ENCODE measurements at regions of chr6 and their contacts with region 1.

Region 1: DNA sequence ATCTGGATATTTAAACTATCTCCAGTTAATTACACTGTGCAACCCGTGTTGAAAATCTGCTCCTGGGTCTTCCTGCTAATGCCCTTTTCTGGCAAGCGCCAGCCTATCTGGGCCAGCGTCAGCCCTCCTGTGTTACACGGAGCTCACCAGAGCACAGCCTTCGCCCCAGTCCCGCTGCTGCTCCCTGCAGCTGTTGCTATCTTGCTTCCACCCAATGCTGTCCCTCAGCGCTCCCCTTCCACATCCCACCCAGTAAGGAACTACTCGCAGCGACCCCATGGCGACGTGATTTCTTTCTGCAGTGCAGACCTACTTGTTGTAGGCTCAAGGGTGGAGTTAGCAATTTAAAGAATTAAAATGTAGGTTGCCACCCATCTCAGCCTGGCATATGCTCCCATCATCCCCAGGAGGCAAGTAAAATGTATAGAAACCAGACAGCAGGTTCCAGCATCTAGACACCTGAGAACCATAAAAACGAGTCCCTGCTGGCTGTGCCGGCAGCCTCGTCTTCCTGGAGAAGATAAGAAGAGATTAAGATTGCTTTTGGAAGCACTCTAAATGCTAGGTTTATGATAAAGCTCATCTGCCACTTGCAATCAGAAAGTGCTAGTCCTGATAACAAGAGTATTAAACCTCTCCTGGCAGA is 254.3 kb upstream of the FOXQ1 start:
- DNase-seq: no peak

Region 2: DNA sequence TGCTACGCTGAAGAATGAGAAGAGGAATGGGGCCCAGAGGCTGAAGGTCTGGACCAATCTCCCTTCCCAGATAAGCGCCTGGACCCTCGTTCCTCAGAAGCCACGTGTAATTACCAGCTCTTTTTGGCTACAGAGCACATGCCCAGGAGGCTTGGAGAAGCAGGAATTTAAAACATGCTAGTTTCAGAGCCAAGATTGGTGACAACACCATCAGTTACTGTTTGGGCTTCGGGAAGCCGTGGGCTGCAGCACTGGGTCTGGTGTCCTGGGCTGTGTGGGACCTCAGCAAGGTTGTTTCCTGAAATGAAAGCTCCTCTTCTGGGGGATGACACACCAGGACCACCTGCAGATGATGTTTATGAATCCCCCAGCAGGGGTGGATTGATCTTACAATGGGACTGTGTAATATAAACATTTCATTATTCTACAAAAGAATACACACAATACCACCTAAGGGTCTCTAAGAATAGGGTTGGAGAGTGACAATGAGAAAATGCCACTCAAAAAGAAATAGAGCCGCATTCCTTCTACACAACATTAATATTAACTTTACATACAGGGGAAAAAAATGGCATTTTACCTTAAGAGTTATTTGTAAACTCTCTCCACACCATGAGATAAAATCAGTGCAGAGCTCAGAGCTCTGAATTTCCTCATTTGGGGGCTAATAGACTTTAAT is 46.5 kb after region 1 on chr6:
- intact Hi-C with region 1: loop called in 1 of 2 experiments (anchors 1 kb)
- DNase-seq: no peak

Region 3: DNA sequence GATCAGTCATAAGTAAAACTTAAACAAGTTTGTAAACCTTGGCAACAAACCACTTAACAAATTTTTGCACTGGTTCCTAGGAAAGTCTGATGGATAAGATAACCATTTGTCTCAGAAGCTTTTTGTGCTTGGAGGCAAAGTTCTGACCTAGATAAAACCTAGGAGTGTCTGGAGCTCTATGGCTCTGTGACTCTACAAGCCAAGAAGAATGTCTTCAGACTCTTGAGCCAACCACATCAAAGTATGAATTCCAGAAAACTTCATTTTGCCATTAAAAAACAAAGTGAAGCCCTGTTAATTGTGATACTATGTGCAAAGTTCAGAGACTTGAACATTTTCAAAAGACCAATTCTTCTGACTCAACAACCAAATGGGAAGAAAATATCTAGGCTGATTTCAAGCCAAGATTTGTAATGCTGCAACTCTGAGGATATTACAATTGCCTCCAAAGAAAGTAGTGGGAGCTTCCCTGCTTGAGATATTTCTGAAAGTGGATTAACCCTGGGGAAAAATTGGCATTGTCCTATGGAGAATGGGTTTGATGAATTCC is 96.2 kb after region 1 on chr6:
- intact Hi-C with region 1: no loop called
- DNase-seq: no peak

Measured in posterior vena cava (tissue), 2 donors.